ENCODE measurements at regions of chr17 and their contacts with region 1.

Region 1: DNA sequence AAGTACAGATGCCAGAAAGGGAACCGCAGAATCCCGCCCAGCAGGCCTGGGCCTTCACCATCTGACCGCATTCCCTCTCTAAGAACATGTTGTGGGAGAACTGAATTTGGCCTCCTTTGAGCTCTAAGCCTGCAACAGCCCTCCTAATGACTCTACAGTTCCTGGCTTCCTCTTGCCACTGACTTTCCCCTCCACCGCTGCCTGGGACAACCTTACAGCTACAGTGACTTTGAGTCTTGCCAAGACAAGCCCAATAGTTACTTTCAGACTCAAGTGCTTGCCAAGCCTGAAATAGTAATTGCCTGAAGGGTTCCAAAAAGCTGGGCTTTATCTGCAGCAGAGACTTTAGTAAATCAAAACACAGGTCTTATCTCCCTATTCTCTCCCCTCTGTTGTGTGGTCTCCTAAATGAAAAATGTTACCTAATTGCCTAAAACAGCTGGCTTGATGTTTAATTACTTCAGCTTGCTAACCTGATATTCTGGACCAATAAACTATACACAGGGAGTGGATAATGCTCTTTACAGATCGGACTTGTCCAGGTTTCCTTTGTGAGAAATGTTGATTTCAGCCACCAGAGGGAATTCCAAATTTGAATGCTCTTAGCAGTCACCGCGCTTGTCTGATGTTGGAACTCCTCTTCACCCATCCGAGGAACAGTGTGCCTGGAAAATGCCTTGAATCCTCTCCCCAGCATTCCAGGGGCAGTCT is 85.1 kb upstream of the TBX2 start:
- DNase-seq: peak; percentile 25 to 87
- H3K4me3 ChIP-seq: peak overlapping the region in 1 of 2 donors; percentile 27
- H3K27ac ChIP-seq: peak overlapping the region; percentile 77 to 88
- H3K4me1 ChIP-seq: peaks cover 6 to 16% of the 10 kb centered on the region in 2 donors
- H3K27me3 ChIP-seq: no peaks in the 10 kb centered on the region
- CTCF ChIP-seq: peak in 1 of 3 experiments; percentile 19

Region 2: GRCh38 chr17:61251939-61252896 is 62.3 kb before region 1 on chr17:
- intact Hi-C with region 1: loop called (anchors 2 kb)
- DNase-seq: peak; percentile 90 to 99
- H3K4me3 ChIP-seq: no peak overlapping the region
- H3K27ac ChIP-seq: peak overlapping the region; percentile 73 to 91
- H3K4me1 ChIP-seq: peaks cover 6 to 55% of the 10 kb centered on the region in 2 donors
- H3K27me3 ChIP-seq: no peaks in the 10 kb centered on the region
- CTCF ChIP-seq: no peak

Measured in ascending aorta (tissue), 2 donors.